ENCODE measurements at regions of chrX and their contacts with region 1.

Region 1: DNA sequence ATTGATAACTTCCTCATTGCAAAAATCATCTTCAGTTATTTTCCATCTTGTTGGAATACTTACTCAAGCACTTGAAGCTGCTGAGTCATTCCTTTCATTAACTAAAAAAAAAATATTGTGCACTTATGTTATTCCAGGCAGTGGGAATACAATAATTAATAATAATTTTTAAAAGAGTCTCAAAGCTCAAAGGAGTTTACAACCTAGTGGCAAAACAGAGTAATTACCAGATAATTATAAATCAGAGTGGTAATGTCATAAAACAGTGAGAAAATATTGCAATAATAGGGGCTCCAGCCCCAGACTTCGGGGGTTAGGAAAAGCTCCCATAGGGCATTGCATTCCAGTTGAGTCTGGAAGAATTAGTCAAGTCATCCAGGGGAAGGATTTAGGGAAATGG is 79.6 kb downstream of the DDX53 start:
- DNase-seq: no peak

Region 2: GRCh38 chrX:22795716-22796115 is 283.6 kb before region 1 on chrX:
- intact Hi-C with region 1: no loop called
- DNase-seq: no peak

Region 3: DNA sequence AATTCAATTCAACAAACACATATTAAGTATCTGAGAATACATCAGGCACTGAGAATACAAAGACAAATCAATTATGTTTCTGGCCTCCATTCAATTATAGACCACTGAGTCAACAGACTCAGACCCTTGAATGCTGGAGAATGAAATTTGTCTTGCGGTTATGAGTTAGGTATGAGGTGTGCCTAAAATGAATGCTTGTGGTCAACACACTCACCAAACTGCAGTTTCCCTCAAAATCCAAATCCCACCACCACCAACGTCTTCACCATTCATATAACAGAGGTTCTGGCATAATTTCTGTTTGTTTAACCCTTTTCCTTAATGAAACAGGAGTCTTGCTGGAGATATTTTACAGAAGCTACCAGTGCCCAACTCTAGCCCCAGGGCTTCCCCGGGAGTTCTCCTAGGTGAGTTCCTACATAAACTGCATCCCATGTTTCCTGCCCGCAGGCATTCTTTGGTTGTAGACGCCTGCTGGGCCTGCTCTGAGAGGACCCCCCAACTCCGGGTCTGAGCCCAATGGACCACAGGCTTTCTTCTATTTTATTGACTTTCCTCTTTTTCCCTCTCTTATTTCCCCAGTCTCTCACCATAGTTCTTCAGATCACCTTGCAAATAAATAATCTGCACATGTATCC is 39.7 kb after region 1 on chrX:
- intact Hi-C with region 1: loop called in 1 of 2 experiments (anchors 2 kb)
- DNase-seq: no peak